Activated naive CD4-positive, alpha-beta T cell treated with anti-CD3 and anti-CD28 coated beads for 36 hours (primary cell): ENCODE measurements at regions of chr3 and their contacts with region 1.

Region 1: DNA sequence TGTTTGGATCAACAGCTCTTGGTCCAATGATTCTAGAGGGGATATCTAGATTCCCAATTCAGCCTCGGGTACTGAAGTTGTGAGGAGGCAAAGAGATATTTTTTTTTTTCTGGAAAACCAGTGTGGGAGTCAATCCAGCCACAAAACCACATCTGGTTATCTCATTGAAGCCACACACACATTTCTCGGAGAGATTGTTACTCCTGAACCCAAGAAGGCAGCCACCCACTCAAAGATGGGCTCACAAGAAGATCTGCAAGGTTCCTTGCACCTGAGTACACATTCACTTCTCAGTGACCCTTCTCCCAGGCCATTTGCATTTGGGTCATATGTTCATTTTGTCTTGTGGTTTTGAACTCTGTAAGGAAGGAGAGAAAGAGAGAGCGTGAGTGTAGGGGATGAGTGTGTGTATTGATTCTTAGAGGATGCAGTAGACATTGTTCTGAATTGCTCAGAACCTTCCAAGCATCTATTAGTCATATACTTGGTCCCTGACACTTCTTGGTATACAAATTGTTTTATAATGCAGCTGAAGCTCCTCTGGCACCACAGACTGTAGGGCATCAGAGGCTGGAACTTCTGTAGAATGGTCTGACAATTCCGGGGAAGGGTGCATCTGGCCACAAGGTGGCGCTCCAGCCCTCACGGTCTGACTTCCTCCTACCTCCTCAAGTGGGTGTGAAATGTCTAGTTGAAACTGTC is 39.3 kb upstream of the TRA2B start:
- DNase-seq: peak; percentile 94
- H3K4me3 Mint-ChIP-seq: no peak overlapping the region
- H3K27ac Mint-ChIP-seq: no peak overlapping the region
- H3K4me1 Mint-ChIP-seq: peaks cover 9% of the 10 kb centered on the region
- H3K27me3 Mint-ChIP-seq: no peaks in the 10 kb centered on the region

Region 2: GRCh38 chr3:185733980-185734724 is 243.0 kb before region 1 on chr3:
- CTCF ChIA-PET with region 1: no interaction called
- intact Hi-C with region 1: loop called (anchors 1 kb)
- DNase-seq: peak; percentile 50
- H3K4me3 Mint-ChIP-seq: no peak overlapping the region
- H3K27ac Mint-ChIP-seq: no peak overlapping the region
- H3K4me1 Mint-ChIP-seq: no peaks in the 10 kb centered on the region
- H3K27me3 Mint-ChIP-seq: peaks cover 5% of the 10 kb centered on the region

Region 3: GRCh38 chr3:185942907-185943759 is 34.0 kb before region 1 on chr3:
- CTCF ChIA-PET with region 1: interaction called, 31 read pairs
- intact Hi-C with region 1: loop called (anchors 1 kb)
- DNase-seq: peak; percentile 92
- H3K4me3 Mint-ChIP-seq: peak overlapping the region; percentile 28
- H3K27ac Mint-ChIP-seq: no peak overlapping the region
- H3K4me1 Mint-ChIP-seq: peaks cover 17% of the 10 kb centered on the region
- H3K27me3 Mint-ChIP-seq: no peaks in the 10 kb centered on the region

Region 4: GRCh38 chr3:185959609-185960517 is 17.3 kb before region 1 on chr3:
- CTCF ChIA-PET with region 1: interaction called, 4 read pairs
- intact Hi-C with region 1: loop called (anchors 1 kb)
- DNase-seq: peak; percentile 38
- H3K4me3 Mint-ChIP-seq: no peak overlapping the region
- H3K27ac Mint-ChIP-seq: no peak overlapping the region
- H3K4me1 Mint-ChIP-seq: peaks cover 9% of the 10 kb centered on the region
- H3K27me3 Mint-ChIP-seq: no peaks in the 10 kb centered on the region

Region 5: GRCh38 chr3:186241910-186242821 is 265.0 kb after region 1 on chr3:
- CTCF ChIA-PET with region 1: interaction called, 23 read pairs
- intact Hi-C with region 1: loop called (anchors 1 kb)
- DNase-seq: peak; percentile 87
- H3K4me3 Mint-ChIP-seq: peak overlapping the region; percentile 17
- H3K27ac Mint-ChIP-seq: no peak overlapping the region
- H3K4me1 Mint-ChIP-seq: peaks cover 7% of the 10 kb centered on the region
- H3K27me3 Mint-ChIP-seq: peaks cover 7% of the 10 kb centered on the region

Region 6: DNA sequence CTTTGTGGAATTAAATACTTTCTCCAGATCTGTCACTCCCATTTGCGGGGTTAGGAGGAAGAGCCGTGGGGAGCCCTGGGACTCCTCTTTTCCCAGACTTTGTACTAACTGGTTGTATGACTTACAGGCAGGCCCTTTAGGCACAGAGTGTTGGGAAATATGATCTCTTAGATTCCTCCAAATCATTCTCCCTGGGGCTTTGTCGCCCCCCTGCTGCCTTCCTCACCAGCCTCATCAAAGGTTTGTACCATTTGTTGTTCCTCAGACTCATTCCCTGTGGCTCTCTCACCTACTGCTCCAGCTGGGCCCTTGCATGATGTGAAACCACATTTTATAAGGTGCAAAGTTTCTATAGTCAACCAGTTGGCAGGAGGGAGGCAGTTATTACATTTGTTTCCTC is 510.7 kb after region 1 on chr3:
- CTCF ChIA-PET with region 1: no interaction called
- intact Hi-C with region 1: loop called (anchors 5 kb)
- DNase-seq: no peak
- H3K4me3 Mint-ChIP-seq: no peak overlapping the region
- H3K27ac Mint-ChIP-seq: no peak overlapping the region
- H3K4me1 Mint-ChIP-seq: peaks cover 13% of the 10 kb centered on the region
- H3K27me3 Mint-ChIP-seq: no peaks in the 10 kb centered on the region

Region 7: DNA sequence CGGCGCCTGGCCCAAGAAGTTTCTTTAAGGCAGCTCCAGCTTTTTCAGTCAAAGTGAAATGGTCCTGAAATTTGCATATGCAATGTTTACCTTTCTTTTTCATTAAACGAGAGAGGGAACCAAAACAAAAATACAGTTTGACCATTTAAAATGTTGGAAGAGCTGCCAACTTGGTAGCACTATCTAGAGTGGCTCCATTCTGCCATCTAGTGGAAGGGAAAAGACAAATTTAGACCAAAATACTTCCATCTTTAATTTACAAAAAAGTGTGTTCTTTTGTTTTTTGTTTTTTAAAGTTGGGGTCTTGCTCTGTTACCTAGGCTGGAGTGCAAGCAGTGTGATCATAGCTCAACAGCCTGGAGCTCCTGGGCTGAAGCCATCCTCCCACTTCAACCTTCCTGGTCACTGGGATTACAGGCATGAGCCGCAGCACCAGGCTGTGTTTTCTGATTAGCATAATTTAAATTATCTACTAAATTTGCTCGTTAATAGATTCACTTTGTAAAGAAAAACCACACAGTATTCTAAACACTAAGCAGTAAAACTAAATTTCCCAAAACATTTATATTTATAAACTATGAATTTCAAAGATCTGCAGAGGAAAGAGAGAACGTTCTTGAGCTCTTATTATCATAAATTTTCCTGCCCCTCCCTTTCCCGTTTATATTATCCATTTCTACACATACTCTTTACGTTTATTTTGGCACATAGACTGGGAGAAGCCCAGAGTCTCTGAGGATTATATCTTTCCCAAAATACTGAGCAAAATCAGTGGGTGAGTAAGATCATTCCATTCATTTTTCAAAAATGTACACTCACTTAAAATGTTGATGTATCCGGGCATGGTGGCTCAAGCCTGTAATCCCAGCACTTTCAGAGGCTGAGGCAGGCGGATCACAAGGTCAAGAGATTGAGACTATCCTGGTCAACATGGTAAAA is 844.6 kb after region 1 on chr3:
- CTCF ChIA-PET with region 1: no interaction called
- intact Hi-C with region 1: loop called (anchors 5 kb)
- DNase-seq: peak; percentile 12
- H3K4me3 Mint-ChIP-seq: no peak overlapping the region
- H3K27ac Mint-ChIP-seq: no peak overlapping the region
- H3K4me1 Mint-ChIP-seq: peaks cover 25% of the 10 kb centered on the region
- H3K27me3 Mint-ChIP-seq: peaks cover 12% of the 10 kb centered on the region